ENCODE measurements at regions of chr12 and their contacts with region 1.

Region 1: DNA sequence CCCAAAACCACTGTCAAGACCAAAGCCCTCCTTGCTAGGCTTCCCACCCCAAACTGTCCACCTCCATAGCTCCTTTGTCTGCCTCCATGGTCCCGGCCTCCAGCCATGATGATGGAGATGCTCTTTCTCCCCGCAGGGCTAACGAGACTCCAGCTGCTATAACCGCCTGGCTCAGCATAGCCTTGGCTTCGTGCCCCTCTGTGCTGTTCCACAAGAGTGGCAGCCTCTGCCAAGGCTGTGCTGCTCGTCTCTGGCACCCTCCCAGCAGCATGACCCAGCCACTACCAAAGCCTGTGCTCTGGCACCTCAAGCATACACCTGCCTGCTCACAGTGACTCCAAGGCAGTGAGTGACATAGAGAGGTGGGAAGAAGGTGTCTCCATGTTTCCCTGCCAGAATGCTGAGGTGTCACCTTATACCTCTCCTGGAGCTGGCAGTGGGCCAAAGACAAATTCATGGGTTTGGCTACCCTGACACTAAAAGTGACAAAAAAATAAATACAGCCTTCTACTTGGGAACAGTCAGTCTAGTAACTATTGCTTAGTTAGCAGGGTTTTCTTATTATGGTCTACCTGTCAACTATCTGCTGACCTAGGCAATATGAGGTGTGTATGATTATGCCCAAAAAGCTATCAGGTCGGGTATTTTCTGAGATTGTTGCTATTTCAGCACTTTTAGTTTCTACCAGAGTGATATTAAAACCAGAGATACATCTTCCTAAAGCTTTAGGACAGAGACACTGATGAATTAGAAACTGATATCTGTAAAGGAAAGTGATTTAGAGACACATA is 16.1 kb upstream of the KRT73 start:
- DNase-seq: no peak
- H3K4me3 ChIP-seq: no peak overlapping the region
- CTCF ChIP-seq: no peak

Region 2: DNA sequence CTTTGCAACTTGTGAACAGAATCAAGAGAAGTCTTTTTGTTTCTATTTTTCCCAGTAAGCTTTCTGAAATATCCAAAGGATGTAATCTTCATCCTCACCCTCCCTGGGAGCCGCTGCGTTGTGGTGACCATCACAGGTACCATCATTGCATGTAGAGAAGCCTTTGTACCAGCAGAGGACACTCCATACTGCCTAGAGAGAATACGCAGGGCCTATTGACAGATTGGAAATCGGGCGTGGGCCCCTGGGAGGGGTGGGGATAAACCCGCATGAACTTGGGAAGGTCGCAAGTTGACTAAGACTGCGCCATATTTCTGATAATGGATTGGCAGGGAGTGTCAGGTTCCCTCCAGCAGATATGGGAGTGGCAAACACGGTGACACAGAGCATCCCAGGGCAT is 33.0 kb after region 1 on chr12:
- in situ Hi-C with region 1: loop called (anchors 5 kb)
- DNase-seq: no peak
- H3K4me3 ChIP-seq: no peak overlapping the region
- CTCF ChIP-seq: no peak

Region 3: GRCh38 chr12:52741392-52742195 is 107.1 kb after region 1 on chr12:
- in situ Hi-C with region 1: no loop called
- DNase-seq: peak; percentile 39
- H3K4me3 ChIP-seq: no peak overlapping the region
- CTCF ChIP-seq: no peak

Region 4: DNA sequence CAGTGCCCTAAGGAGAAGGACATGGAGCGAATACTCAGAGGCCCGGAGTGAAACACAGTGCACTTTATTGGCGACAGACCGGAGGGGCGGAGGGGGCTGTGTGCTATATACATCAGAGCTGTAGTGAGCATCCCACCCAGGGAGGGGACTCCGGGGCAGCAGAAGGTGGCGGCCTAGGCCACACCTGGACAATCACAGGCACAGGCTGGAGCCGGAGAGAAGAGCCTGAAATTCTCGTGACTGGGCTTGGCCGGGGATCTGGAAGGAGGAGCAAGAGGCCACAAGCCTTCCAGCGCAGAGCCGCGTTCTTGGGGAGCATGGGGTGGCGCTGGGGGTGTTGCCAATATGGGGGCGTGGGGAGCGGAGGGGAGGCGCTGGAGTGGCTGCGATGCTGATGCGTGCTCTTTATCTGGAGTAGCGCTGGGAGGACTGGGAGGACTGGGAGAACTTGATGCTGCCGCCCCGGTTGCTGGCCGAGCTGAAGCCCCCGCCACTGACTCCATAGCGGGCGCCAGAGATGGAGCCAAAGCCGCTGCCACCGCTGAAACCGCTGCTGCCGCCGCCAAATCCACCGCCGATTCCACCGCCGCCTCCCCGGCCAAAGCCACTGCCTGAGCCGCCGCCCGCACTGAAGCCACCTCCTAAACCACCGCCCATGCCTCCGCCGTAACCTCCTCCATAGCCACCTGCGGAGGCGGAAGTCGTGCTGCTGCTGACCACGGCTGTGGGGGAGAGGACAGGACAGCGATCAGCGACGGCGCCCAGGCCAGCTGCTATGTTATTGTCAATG is 155.4 kb after region 1 on chr12:
- in situ Hi-C with region 1: no loop called
- DNase-seq: no peak
- H3K4me3 ChIP-seq: no peak overlapping the region
- CTCF ChIP-seq: no peak

Measured in astrocyte of the cerebellum (primary cell).